Psoas muscle (tissue), 8 donors: ENCODE measurements at regions of chr5 and their contacts with region 1.

Region 1: DNA sequence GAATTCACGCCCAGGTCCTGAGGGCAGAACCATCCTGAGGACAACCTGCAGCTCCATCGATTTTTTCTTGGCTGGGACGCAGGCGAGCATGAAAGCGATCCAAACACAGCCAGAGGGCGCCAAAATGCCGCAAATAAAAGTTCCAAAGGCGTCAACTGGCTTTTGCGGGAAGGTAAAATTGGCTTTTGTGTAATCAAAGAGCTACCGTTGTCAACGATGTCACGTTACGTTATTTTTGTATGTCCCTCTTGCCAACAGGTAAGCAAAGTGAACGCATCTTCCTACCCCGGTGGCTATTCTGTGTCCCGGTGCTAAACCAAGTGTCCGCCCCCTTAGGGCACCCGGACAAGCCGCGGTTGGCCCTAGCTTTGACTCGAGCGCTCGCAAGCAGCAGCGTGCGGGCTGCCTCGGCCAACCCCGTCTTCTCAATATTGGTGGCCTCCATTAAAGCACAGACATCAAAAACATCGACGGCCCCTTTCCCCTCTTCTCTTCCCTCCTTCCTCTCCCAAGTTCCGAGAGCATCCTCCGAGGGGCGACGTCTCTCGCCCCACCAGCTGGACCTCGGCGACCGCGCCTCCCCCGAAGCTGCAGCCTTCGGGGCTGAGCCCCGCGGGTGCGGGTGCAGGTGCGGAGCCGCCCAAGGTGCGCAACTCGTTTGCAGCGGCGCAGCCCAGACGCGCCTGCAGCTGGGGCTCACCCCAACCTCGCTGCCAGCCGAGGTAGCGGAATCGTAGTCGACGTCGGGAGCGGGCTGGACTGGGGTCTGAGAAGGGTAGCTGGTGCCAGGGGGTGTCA is 1.1 kb upstream of the BASP1 start:
- DNase-seq: peak; percentile 71 to 78
- ATAC-seq: peak in 3 of 4 donors; percentile 42 to 67 (median 48)
- H3K4me3 ChIP-seq: peak overlapping the region; percentile 29
- H3K27ac ChIP-seq: no peak overlapping the region
- H3K4me1 ChIP-seq: no peaks in the 10 kb centered on the region
- H3K27me3 ChIP-seq: peaks cover 0 to 49% (median 17%) of the 10 kb centered on the region in 3 donors
- CTCF ChIP-seq: peak; percentile 62

Region 2: GRCh38 chr5:18314192-18314778 is 1097.9 kb after region 1 on chr5:
- intact Hi-C with region 1: loop called (anchors 2 to 5 kb)
- DNase-seq: no peak
- ATAC-seq: no peak
- H3K4me3 ChIP-seq: no peak overlapping the region
- H3K27ac ChIP-seq: no peak overlapping the region
- H3K4me1 ChIP-seq: no peaks in the 10 kb centered on the region
- H3K27me3 ChIP-seq: no peaks in the 10 kb centered on the region
- CTCF ChIP-seq: peak; percentile 48

Region 3: GRCh38 chr5:18699681-18700080 is 1483.3 kb after region 1 on chr5:
- intact Hi-C with region 1: loop called in 1 of 2 experiments (anchors 10 kb)
- DNase-seq: no peak
- ATAC-seq: no peak
- H3K4me3 ChIP-seq: no peak overlapping the region
- H3K27ac ChIP-seq: no peak overlapping the region
- H3K4me1 ChIP-seq: no peaks in the 10 kb centered on the region
- H3K27me3 ChIP-seq: no peaks in the 10 kb centered on the region
- CTCF ChIP-seq: no peak